ENCODE measurements at regions of chr13 and their contacts with region 1.

Region 1: GRCh38 chr13:50893211-50893852 is 16.3 kb upstream of the RNASEH2B start:
- DNase-seq: peak; percentile 93
- H3K4me3 ChIP-seq: peak overlapping the region; percentile 56
- H3K27ac ChIP-seq: peak overlapping the region; percentile 96
- H3K4me1 ChIP-seq: peaks cover 95% of the 10 kb centered on the region
- CTCF ChIP-seq: no peak

Region 2: GRCh38 chr13:50081679-50082425 is 811.5 kb before region 1 on chr13:
- CTCF ChIA-PET with region 1: no interaction called
- POLR2A ChIA-PET with region 1: interaction called, 6 read pairs
- intact Hi-C with region 1: loop called (anchors 1 kb)
- DNase-seq: peak; percentile 98
- H3K4me3 ChIP-seq: peak overlapping the region; percentile 96
- H3K27ac ChIP-seq: peak overlapping the region; percentile 89
- H3K4me1 ChIP-seq: peaks cover 42% of the 10 kb centered on the region
- CTCF ChIP-seq: peak; percentile 63

Region 3: DNA sequence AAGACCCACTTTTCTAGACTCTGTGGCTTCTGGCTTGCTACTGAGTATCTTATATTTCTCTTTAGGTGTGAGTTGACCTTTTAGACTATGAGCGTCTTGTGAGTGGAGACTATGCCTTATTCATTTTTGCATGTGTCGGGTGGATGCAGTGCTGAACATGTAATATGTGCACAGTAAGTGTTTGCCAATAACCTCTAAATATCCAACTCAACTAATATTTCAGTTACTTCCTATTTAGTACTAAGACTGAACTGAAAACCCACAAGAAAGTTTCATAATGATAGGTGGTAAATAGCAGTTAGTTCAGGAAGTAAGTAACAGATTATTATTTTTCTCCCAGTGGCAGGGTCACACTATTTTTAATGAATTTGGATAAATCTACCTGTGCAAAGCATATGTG is 608.8 kb before region 1 on chr13:
- CTCF ChIA-PET with region 1: no interaction called
- POLR2A ChIA-PET with region 1: no interaction called
- intact Hi-C with region 1: no loop called
- DNase-seq: peak; percentile 7
- H3K4me3 ChIP-seq: no peak overlapping the region
- H3K27ac ChIP-seq: no peak overlapping the region
- H3K4me1 ChIP-seq: peaks cover 16% of the 10 kb centered on the region
- CTCF ChIP-seq: no peak

Region 4: DNA sequence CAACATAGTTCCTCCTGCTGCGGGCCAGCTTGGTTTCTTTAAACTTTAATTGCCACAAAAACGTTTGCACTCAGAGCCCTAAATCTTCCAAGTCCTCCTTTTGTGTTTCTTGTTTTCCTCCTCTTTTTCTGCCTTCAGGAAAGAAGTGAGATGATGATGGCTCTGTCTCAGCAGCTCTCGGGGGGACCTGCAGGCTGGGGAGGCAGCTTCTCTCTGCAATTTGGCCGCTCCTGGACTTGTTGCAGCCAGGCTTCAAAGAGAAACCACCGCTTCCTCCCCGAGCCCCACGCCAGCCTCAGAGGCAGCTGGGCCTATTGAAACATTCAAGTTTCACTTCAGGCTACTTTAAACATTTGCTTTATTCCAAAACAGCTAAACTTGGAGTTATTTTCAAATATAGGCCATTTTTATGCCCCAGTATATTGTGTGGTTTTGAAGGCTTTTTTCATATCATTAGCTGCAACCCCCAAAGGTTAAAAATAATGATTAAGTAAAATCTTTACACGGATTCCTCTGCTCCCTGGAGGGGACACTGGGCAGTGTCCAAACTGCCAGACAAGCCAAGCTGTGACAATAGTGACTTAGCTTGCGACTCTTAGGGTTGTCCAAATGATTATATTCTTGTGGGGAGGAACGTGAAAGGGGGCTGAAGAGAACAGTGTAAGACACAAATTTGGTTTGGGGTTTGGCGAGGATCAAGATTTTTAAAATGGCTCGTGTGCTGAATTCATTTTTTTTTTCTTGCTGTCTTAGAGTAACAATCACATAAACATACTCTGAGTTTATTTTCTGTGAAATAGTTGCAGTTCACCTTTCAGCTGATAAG is 380.6 kb before region 1 on chr13:
- CTCF ChIA-PET with region 1: no interaction called
- POLR2A ChIA-PET with region 1: interaction called, 17 read pairs
- intact Hi-C with region 1: no loop called
- DNase-seq: peak; percentile 95
- H3K4me3 ChIP-seq: peak overlapping the region; percentile 65
- H3K27ac ChIP-seq: peak overlapping the region; percentile 98
- H3K4me1 ChIP-seq: peaks cover 78% of the 10 kb centered on the region
- CTCF ChIP-seq: peak; percentile 68

Region 5: GRCh38 chr13:50760751-50761150 is 132.6 kb before region 1 on chr13:
- CTCF ChIA-PET with region 1: no interaction called
- POLR2A ChIA-PET with region 1: interaction called, 17 read pairs
- intact Hi-C with region 1: no loop called
- DNase-seq: no peak
- H3K4me3 ChIP-seq: no peak overlapping the region
- H3K27ac ChIP-seq: no peak overlapping the region
- H3K4me1 ChIP-seq: peaks cover 45% of the 10 kb centered on the region
- CTCF ChIP-seq: no peak

Region 6: DNA sequence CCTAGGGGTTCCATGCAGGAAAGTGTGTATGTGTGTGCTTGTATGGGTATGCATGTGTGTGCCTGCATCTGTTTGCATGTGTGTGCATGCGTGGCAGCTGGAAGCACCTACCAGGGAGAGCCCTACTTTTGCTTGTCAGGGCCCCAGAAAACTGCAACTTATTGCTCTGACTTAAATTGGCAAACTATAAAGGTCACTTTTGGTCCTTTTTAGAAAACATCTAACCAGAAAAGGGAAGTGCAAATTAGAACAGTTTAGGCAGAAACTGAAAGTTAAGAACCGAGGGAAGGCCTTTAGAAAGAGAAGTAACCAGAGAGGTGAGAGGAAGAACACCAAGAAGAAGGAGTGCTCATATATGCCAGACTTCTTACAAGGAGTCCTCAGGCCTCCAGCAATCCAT is 82.3 kb before region 1 on chr13:
- CTCF ChIA-PET with region 1: interaction called, 5 read pairs
- POLR2A ChIA-PET with region 1: interaction called, 37 read pairs
- intact Hi-C with region 1: loop called (anchors 2 kb)
- DNase-seq: peak; percentile 85
- H3K4me3 ChIP-seq: peak overlapping the region; percentile 50
- H3K27ac ChIP-seq: peak overlapping the region; percentile 70
- H3K4me1 ChIP-seq: peaks cover 29% of the 10 kb centered on the region
- CTCF ChIP-seq: no peak

Region 7: GRCh38 chr13:50873467-50873866 is 19.9 kb before region 1 on chr13:
- CTCF ChIA-PET with region 1: no interaction called
- POLR2A ChIA-PET with region 1: interaction called, 31 read pairs
- intact Hi-C with region 1: no loop called
- DNase-seq: no peak
- H3K4me3 ChIP-seq: no peak overlapping the region
- H3K27ac ChIP-seq: no peak overlapping the region
- H3K4me1 ChIP-seq: peaks cover 1% of the 10 kb centered on the region
- CTCF ChIP-seq: no peak

Measured in OCI-LY7 (cell line).